GM10248 (cell line): ENCODE measurements at regions of chr17 and their contacts with region 1.

Region 1: GRCh38 chr17:34961093-34961911 is at the starts of genes CCT6B and ZNF830:
- DNase-seq: peak; percentile 95
- CTCF ChIP-seq: no peak

Region 2: GRCh38 chr17:34721326-34721725 is 240.0 kb before region 1 on chr17:
- CTCF ChIA-PET with region 1: no interaction called
- POLR2A ChIA-PET with region 1: no interaction called
- DNase-seq: no peak
- CTCF ChIP-seq: no peak

Region 3: GRCh38 chr17:34930283-34930682 is 31.0 kb before region 1 on chr17:
- CTCF ChIA-PET with region 1: no interaction called
- POLR2A ChIA-PET with region 1: no interaction called
- DNase-seq: no peak
- CTCF ChIP-seq: no peak

Region 4: DNA sequence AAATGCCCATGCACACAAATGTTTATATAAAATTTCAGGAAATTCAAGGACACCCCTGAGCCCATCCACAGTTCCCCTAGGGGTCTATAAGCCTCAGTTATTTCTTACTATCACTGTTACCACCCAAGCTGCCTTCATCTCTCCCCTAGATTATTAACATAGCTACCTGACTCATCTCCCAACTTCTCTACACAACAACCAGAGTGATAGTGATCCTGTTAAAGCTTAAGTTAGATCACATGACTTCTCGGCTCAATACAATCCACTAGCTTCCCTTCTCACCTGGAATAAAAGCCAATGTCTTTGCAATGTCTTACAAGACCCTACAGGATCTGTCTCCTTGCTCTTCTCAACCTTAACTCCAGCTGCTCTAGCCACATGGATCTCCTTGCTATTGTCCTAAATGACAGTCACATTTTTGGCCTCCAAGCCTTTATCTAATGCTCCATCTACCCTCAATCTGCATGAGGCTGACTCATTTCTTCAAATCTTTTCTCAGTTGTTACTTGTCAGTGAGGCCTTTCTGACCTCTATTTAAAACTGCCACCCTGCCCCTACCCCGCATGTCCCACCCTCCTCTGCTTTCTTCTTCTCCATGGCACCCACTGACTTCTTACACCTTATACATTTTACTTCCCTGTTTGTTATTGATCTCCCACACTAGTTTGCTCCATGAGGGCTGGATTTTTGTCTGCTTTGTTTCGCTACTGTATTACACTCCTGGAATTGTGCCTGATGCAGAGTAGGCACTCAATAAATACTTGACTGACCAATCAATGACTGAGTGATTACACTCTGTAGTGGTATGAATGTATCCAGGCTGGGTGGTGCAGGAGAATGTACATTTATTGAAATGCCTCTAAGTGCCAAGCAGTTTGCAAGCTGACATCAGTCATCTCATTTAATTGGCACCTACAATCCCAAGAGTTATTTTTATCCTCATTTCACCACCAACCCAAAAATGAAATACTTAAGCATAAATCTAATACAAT is 13.8 kb after region 1 on chr17:
- CTCF ChIA-PET with region 1: interaction called, 45 read pairs
- POLR2A ChIA-PET with region 1: interaction called, 6 read pairs
- DNase-seq: no peak
- CTCF ChIP-seq: no peak

Region 5: GRCh38 chr17:34980681-34981537 is 19.6 kb after region 1 on chr17:
- CTCF ChIA-PET with region 1: interaction called, 45 read pairs
- POLR2A ChIA-PET with region 1: interaction called, 3 read pairs
- DNase-seq: peak; percentile 93
- CTCF ChIP-seq: peak; percentile 69